Activated B cell treated with CpG ODN at 0.5 μM for 24 hours (primary cell): ENCODE measurements at regions of chr14 and their contacts with region 1.

Region 1: GRCh38 chr14:22766456-22767322 is at the start of gene OXA1L:
- DNase-seq: peak; percentile 79
- ATAC-seq: peak; percentile 89
- H3K4me3 Mint-ChIP-seq: peak within 1 kb of the TSS; percentile 93
- H3K27ac Mint-ChIP-seq: peak within 1 kb of the TSS; percentile 97
- H3K4me1 Mint-ChIP-seq: peaks cover 35% of the 10 kb centered on the region
- H3K27me3 Mint-ChIP-seq: no peaks in the 10 kb centered on the region
- CTCF ChIP-seq: no peak
- total RNA-seq, gene OXA1L: 174 and 190 TPM in 2 replicates

Region 2: DNA sequence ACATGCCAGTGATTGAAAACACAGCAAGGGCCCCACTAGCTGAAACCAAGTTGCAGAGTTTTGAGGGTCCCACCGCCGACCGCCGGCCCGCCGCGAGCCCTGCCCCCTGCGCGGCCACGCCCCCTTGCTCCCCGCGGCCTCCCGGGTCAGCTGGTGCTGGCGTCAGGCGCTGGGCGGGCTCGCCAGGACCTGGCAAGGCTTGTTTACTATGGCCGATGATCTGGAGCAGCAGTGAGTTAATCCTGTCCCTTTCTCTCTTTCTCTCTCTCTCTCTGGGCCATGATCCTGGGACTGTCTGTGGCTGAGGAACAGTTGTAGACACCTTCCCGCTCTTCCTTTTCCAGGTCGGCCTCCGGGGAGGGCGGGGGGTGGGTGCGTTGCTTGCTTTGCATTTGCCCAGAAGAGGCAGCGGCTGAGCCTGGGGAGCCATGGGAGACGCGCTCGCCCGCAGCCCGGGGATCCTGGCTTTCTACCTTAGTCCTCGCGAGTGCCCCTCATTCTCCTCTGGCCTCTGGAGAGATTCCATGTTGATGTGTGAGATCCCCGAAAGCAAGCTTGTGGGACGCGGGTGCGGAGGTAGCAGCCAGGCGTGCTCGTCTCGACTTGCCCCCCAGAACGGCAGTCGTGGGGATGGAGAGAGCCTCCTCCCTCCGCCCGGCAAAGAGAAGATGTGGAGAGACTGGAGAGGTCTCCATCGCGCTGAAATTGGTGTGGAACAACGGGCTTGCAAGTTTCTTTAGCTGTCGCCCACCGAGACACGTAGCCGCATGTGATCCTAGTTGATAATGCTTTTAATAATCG is 168.4 kb before region 1 on chr14 and contains the start of gene ABHD4:
- CTCF ChIA-PET with region 1: no interaction called
- POLR2A ChIA-PET with region 1: interaction called, 11 read pairs
- intact Hi-C with region 1: no loop called
- DNase-seq: peak; percentile 71
- ATAC-seq: peak; percentile 90
- H3K4me3 Mint-ChIP-seq: peak within 1 kb of the TSS; percentile 95
- H3K27ac Mint-ChIP-seq: peak within 1 kb of the TSS; percentile 88
- H3K4me1 Mint-ChIP-seq: peaks cover 28% of the 10 kb centered on the region
- H3K27me3 Mint-ChIP-seq: peaks cover 2% of the 10 kb centered on the region
- CTCF ChIP-seq: no peak
- total RNA-seq, gene ABHD4: 12.1 and 13.0 TPM in 2 replicates

Region 3: GRCh38 chr14:22791301-22791700 is 24.6 kb after region 1 on chr14:
- CTCF ChIA-PET with region 1: no interaction called
- POLR2A ChIA-PET with region 1: interaction called, 37 read pairs
- intact Hi-C with region 1: loop called (anchors 1 kb)
- DNase-seq: no peak
- ATAC-seq: no peak
- H3K4me3 Mint-ChIP-seq: peak overlapping the region; percentile 28
- H3K27ac Mint-ChIP-seq: peak overlapping the region; percentile 91
- H3K4me1 Mint-ChIP-seq: peaks cover 70% of the 10 kb centered on the region
- H3K27me3 Mint-ChIP-seq: no peaks in the 10 kb centered on the region
- CTCF ChIP-seq: no peak

Region 4: DNA sequence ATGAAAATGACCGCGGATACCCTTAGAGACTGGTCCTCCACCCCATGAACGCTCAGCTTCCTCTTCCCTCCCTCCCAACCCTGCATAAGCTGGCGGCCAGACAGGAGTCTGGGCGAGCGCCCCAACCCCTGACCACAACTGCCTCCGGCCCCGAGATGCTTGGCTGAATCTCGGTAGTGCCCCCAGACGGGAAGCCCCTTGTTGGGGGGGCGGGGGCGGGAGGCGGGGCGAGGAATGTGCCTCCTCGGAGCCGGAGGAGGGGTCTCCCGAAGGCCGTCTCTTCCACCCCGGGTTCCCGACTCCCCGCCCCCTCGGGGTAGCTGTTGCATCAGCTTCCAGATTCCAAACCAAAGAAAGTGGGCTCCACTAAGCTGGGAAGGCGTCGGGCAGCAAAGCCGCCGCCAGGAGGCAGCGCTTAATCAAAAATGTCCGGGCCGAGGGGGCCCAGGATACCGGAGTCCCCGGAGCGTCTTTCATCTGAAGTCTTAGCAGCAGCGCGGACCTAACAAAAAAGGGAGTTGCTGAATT is 55.9 kb after region 1 on chr14:
- CTCF ChIA-PET with region 1: interaction called, 13 read pairs
- POLR2A ChIA-PET with region 1: interaction called, 68 read pairs
- intact Hi-C with region 1: loop called (anchors 2 kb)
- DNase-seq: peak; percentile 69
- ATAC-seq: peak; percentile 76
- H3K4me3 Mint-ChIP-seq: peak overlapping the region; percentile 86
- H3K27ac Mint-ChIP-seq: peak overlapping the region; percentile 92
- H3K4me1 Mint-ChIP-seq: peaks cover 60% of the 10 kb centered on the region
- H3K27me3 Mint-ChIP-seq: no peaks in the 10 kb centered on the region
- CTCF ChIP-seq: no peak

Region 5: GRCh38 chr14:22872033-22872832 is 105.5 kb after region 1 on chr14:
- CTCF ChIA-PET with region 1: interaction called, 3 read pairs
- POLR2A ChIA-PET with region 1: interaction called, 10 read pairs
- intact Hi-C with region 1: no loop called
- DNase-seq: peak; percentile 69
- ATAC-seq: peak; percentile 22
- H3K4me3 Mint-ChIP-seq: peak overlapping the region; percentile 89
- H3K27ac Mint-ChIP-seq: peak overlapping the region; percentile 92
- H3K4me1 Mint-ChIP-seq: peaks cover 33% of the 10 kb centered on the region
- H3K27me3 Mint-ChIP-seq: no peaks in the 10 kb centered on the region
- CTCF ChIP-seq: no peak

Region 6: GRCh38 chr14:23252420-23253333 is 486.0 kb after region 1 on chr14:
- CTCF ChIA-PET with region 1: no interaction called
- POLR2A ChIA-PET with region 1: no interaction called
- intact Hi-C with region 1: no loop called
- DNase-seq: no peak
- ATAC-seq: no peak
- H3K4me3 Mint-ChIP-seq: no peak overlapping the region
- H3K27ac Mint-ChIP-seq: no peak overlapping the region
- H3K4me1 Mint-ChIP-seq: no peaks in the 10 kb centered on the region
- H3K27me3 Mint-ChIP-seq: peaks cover 22% of the 10 kb centered on the region
- CTCF ChIP-seq: no peak